Activated CD4-positive, alpha-beta T cell treated with anti-CD3 and anti-CD28 coated beads for 36 hours (primary cell): ENCODE measurements at regions of chr3 and their contacts with region 1.

Region 1: GRCh38 chr3:72447059-72447946 is 400.9 kb downstream of the SHQ1 start:
- DNase-seq: peak; percentile 96
- ATAC-seq: peak; percentile 87
- H3K4me3 Mint-ChIP-seq: peak overlapping the region; percentile 43
- H3K27ac Mint-ChIP-seq: peak overlapping the region; percentile 63
- H3K4me1 Mint-ChIP-seq: peaks cover 38% of the 10 kb centered on the region
- H3K27me3 Mint-ChIP-seq: peaks cover 13% of the 10 kb centered on the region

Region 2: DNA sequence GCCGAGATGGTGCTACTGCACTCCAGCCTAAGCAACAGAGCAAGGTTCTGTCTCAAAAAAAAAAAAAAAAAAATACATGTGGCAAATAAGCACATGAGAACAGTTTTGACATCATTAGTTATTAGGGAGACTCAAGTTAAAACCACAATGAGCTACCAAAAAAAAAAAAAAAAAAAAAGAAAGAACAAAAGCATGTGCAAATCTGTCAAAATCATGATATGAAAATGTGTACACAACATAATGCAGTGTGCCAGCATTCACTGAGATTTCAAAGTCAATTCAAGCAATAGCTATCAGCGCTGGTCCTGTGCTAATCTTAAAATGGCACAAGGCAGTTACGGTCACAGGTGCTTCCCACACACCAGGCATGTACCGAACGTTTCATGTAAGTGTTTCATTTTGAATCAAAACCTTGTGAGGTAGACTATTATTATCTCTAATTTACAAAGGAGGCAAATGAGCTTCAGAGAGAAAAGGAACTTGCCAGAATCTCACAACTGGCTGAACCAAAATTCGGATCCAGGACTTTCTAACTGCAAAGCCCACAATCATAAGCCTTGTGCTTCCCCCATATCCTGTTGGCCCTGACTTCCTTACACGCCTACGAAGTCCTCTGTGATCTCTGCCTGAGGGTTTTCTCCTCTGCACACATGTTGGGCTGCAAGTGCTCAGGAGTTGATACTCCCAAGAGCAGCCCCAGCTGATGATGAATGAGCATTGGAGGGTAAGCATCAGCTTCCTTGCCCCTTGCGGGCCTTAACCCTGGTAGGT is 462.3 kb before region 1 on chr3:
- CTCF ChIA-PET with region 1: no interaction called
- POLR2A ChIA-PET with region 1: no interaction called
- intact Hi-C with region 1: loop called (anchors 10 kb)
- DNase-seq: peak; percentile 69
- ATAC-seq: peak; percentile 84
- H3K4me3 Mint-ChIP-seq: peak overlapping the region; percentile 1
- H3K27ac Mint-ChIP-seq: peak overlapping the region; percentile 64
- H3K4me1 Mint-ChIP-seq: peaks cover 47% of the 10 kb centered on the region
- H3K27me3 Mint-ChIP-seq: peaks cover 4% of the 10 kb centered on the region

Region 3: DNA sequence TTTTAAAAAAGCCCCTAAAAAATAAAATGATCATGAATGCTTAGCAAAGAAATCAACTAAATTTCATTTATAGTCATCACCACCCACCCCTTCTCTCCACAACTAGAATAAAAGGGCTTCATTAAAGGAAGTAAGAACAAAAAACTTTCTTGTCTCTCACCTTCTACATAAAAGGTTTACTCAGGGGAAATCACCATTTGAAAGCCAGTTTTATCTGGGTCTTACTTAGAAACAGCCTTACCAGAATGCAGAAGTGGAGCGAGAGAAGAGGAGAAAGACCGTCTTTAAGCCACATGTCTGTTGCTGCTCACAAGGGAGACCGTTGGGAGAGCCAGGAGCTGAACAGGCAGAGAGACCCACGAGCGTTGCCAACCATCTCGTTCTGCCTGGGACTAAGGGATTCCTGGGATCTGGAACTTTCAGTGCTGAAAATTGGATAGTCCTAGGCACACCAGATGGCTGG is 312.3 kb before region 1 on chr3:
- CTCF ChIA-PET with region 1: no interaction called
- POLR2A ChIA-PET with region 1: no interaction called
- intact Hi-C with region 1: loop called in 1 of 2 experiments (anchors 5 kb)
- DNase-seq: peak; percentile 16
- ATAC-seq: peak; percentile 62
- H3K4me3 Mint-ChIP-seq: peak overlapping the region; percentile 54
- H3K27ac Mint-ChIP-seq: peak overlapping the region; percentile 85
- H3K4me1 Mint-ChIP-seq: peaks cover 48% of the 10 kb centered on the region
- H3K27me3 Mint-ChIP-seq: peaks cover 2% of the 10 kb centered on the region

Region 4: GRCh38 chr3:72395776-72396311 is 51.5 kb before region 1 on chr3:
- CTCF ChIA-PET with region 1: no interaction called
- POLR2A ChIA-PET with region 1: no interaction called
- intact Hi-C with region 1: no loop called
- DNase-seq: no peak
- ATAC-seq: no peak
- H3K4me3 Mint-ChIP-seq: no peak overlapping the region
- H3K27ac Mint-ChIP-seq: no peak overlapping the region
- H3K4me1 Mint-ChIP-seq: peaks cover 52% of the 10 kb centered on the region
- H3K27me3 Mint-ChIP-seq: no peaks in the 10 kb centered on the region

Region 5: DNA sequence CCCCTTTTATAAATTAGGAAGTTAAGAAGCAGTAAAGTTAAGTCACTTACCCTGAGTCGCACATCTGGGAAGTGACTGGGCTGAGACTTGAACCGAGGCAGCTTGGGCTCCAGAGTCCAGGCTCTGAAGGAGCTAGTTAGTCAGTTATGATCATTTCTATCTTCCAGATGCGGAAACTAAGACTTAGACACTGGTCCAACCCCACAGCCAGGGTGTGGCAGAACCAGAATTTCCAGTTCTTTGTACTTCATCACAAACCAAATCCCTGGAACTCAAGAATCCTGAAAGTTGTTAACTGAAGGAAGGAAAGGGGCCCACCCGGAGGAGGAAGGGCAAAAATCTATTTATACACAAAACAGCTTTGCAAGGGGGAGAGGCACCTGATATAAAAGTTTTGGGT is 11.1 kb after region 1 on chr3:
- CTCF ChIA-PET with region 1: no interaction called
- POLR2A ChIA-PET with region 1: no interaction called
- intact Hi-C with region 1: loop called in 1 of 2 experiments (anchors 1 kb)
- DNase-seq: no peak
- ATAC-seq: no peak
- H3K4me3 Mint-ChIP-seq: no peak overlapping the region
- H3K27ac Mint-ChIP-seq: no peak overlapping the region
- H3K4me1 Mint-ChIP-seq: peaks cover 24% of the 10 kb centered on the region
- H3K27me3 Mint-ChIP-seq: peaks cover 15% of the 10 kb centered on the region

Region 6: DNA sequence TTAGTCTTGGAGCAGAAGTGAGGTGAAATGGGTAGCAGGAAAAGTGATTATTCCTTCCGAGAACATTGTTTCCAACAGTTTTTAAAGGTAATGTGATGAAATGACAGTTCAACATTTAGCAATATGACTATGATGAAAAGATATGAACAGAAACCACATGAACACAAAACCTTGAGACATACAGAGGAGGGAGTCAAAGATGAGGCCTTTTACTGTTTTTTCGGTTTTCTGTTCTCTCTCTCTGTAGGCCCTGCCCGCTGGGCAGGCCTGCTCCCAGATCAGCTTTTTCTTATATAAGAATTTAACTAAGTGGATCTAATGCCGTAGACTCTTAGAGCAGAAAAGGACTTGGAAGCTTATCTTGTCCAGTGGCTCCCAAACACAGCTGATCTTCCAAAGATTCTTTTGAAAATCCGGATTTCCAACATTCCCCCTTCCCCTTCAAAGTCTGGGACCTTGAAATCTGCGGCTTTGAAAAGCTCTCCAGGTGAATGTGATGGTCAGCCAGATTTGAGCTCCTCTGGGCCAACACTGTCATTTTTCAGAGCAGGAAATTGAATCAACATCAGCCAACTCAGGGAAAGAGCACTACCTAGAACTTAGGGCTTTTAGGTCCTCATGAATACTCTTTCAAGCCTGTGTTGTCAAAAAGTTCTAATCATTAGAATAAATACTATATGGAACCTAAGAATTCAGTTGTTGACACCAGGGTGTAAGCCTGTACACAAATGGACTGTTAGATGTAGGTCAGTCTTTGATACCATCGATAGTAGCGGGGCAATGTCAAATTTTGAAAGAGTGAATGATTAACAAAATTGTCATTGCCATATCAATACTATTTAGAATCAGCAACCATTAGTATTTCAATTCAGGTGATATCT is 28.2 kb after region 1 on chr3:
- CTCF ChIA-PET with region 1: interaction called, 3 read pairs
- POLR2A ChIA-PET with region 1: no interaction called
- intact Hi-C with region 1: loop called in 1 of 2 experiments (anchors 2 kb)
- DNase-seq: peak; percentile 19
- ATAC-seq: peak; percentile 76
- H3K4me3 Mint-ChIP-seq: no peak overlapping the region
- H3K27ac Mint-ChIP-seq: peak overlapping the region; percentile 78
- H3K4me1 Mint-ChIP-seq: peaks cover 48% of the 10 kb centered on the region
- H3K27me3 Mint-ChIP-seq: no peaks in the 10 kb centered on the region

Region 7: DNA sequence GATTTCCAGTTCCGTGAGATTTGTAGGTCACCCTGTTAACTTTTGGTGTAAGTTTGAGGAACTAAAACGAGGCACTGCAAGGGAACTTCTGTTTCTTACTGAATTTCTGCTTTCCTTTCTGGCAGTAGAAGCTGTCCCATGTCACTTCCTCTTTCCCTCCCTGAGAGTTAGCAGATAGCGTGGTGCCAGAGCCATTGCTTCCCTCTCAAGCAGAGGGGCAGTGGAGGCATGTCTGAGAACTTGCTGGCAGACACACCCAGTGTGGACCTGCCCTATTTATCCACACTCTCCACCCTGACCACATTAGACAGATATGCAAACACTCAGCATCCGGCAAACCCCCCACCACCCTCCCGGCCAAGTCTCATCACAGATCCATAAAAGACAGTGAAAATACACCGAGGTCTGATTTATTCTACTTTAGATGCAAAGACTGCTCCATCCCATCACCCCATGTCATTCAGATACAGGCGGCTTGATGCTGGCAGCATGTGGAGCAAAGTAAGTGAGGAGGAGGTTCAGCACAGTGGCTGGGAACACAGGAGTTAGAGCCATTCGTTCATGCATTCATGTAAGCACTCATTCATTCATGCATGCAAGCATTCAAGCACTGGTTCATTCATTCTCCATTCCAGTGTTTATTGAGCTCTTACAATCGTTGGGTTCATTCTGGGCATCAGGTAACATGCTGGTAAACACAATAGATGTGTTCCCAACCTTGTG is 76.3 kb after region 1 on chr3:
- CTCF ChIA-PET with region 1: no interaction called
- POLR2A ChIA-PET with region 1: no interaction called
- intact Hi-C with region 1: loop called (anchors 1 to 2 kb)
- DNase-seq: no peak
- ATAC-seq: no peak
- H3K4me3 Mint-ChIP-seq: no peak overlapping the region
- H3K27ac Mint-ChIP-seq: peak overlapping the region; percentile 55
- H3K4me1 Mint-ChIP-seq: peaks cover 45% of the 10 kb centered on the region
- H3K27me3 Mint-ChIP-seq: no peaks in the 10 kb centered on the region

Region 8: GRCh38 chr3:72629191-72629631 is 181.9 kb after region 1 on chr3:
- CTCF ChIA-PET with region 1: no interaction called
- POLR2A ChIA-PET with region 1: interaction called, 4 read pairs
- intact Hi-C with region 1: loop called (anchors 2 to 5 kb)
- DNase-seq: no peak
- ATAC-seq: peak; percentile 67
- H3K4me3 Mint-ChIP-seq: no peak overlapping the region
- H3K27ac Mint-ChIP-seq: peak overlapping the region; percentile 79
- H3K4me1 Mint-ChIP-seq: peaks cover 60% of the 10 kb centered on the region
- H3K27me3 Mint-ChIP-seq: no peaks in the 10 kb centered on the region

Region 9: GRCh38 chr3:72682936-72683452 is 235.7 kb after region 1 on chr3:
- CTCF ChIA-PET with region 1: no interaction called
- POLR2A ChIA-PET with region 1: no interaction called
- intact Hi-C with region 1: no loop called
- DNase-seq: no peak
- ATAC-seq: peak; percentile 55
- H3K4me3 Mint-ChIP-seq: no peak overlapping the region
- H3K27ac Mint-ChIP-seq: no peak overlapping the region
- H3K4me1 Mint-ChIP-seq: peaks cover 12% of the 10 kb centered on the region
- H3K27me3 Mint-ChIP-seq: peaks cover 2% of the 10 kb centered on the region